GM12878 (cell line): ENCODE measurements at regions of chr16 and their contacts with region 1.

Region 1: DNA sequence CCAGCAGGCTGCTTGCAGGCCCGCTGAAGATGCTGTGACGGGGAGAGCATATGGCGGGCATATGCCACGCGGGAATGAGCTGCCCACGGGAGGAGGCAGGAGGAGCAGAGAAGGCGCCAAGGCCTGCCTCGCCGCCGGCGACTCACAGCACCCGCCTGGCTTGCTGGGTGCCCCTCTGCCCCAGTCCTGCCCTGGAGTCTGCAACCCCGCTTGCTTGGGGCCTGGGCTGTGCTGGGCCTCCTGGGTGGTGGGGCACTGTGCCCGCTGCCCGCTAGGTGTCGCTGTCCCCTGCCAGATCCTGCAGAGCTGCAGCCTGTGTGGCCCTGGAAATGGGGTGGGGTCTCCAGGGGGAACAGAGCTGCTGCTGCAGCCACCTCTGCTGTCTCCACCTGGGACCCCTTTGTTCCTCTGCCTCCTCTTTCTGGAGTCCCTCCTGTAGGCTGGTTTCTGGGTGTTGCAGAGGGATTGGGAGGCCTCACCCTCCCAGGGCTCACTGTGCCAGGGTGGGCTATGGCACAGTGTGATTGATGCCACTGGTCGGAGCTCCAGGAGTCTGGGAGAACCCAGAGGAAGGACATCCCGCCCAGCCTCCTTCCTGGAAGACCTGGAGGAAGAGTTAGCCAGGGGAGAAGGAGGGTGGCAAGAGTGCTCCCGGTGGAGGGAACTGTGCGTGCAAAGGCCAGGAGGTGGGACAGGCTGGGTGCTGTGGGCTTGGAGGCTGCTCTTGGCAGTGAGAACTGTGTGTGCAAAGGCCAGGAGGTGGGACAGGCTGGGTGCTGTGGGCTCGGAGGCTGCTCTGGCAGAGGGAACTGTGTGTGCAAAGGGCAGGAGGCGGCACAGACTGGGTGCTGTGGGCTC is 141.0 kb upstream of the CIBAR2 start:
- DNase-seq: no peak
- ATAC-seq: peak; percentile 97
- H3K4me3 ChIP-seq: no peak overlapping the region
- H3K27ac ChIP-seq: no peak overlapping the region
- H3K4me1 ChIP-seq: peaks cover 3% of the 10 kb centered on the region; the same call in 1 of the 2 replicates
- H3K27me3 ChIP-seq: peaks cover 3 to 5% of the 10 kb centered on the region in 2 experiments; a peak in 3 of 4 replicates
- CTCF ChIP-seq: peak; percentile 88 to 98 (median 93)
- EP300 ChIP-seq: no peak
- POLR2A ChIP-seq: no peak
- RAD21 ChIP-seq: peak; percentile 50

Region 2: DNA sequence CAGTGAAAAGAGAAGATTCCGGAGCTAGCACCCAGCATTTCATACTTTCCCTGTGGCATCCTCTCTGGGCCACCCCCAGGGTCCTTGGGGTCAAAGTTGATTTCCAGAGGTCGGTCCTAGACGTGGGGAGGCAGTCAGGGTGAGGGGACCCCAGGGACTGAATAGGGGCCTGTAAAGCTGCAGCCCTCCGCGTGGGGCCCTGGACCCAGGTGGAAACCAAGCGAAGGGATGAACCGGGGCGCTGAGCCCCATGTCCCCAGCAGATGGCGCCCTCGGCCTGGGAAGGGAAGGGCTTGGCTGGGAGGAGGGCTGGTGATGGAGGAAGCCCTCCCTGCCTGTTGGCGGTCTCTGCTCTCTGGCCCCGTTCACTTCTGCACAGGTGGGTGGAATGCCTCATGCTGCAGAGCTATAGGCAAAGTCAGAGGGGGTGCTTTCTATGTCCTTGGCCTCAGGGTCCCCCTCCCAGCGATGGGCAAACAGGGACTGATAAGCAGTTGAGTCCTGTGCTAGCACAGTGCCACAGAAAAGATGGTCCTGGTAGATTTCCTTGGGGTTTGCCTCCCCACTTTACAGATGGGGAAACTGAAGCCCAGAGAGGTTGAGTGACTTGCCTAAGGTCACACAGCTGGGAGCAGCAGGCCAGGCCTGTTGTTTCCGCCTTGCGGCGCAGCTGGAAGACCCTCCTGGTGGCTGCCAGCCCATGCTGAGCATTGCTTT is 22.4 kb after region 1 on chr16:
- CTCF ChIA-PET with region 1: interaction called, 11 read pairs
- POLR2A ChIA-PET with region 1: no interaction called
- RAD21 ChIA-PET with region 1: interaction called, 3 read pairs
- SMC1A ChIA-PET with region 1: no interaction called
- in situ Hi-C with region 1: no loop called
- intact Hi-C with region 1: no loop called
- DNase-seq: no peak
- ATAC-seq: peak; percentile 97
- H3K4me3 ChIP-seq: no peak overlapping the region
- H3K27ac ChIP-seq: no peak overlapping the region
- H3K4me1 ChIP-seq: no peaks in the 10 kb centered on the region
- H3K27me3 ChIP-seq: peaks cover 0 to 3% of the 10 kb centered on the region in 2 experiments; a peak in 1 of 4 replicates
- CTCF ChIP-seq: peak; percentile 87 to 97 (median 92)
- EP300 ChIP-seq: no peak
- POLR2A ChIP-seq: no peak
- RAD21 ChIP-seq: peak; percentile 85